ENCODE measurements at regions of chr2 and their contacts with region 1.

Region 1: GRCh38 chr2:173402405-173402974 is 47.8 kb downstream of the CDCA7 start:
- DNase-seq: peak; percentile 48
- ATAC-seq: peak; percentile 79
- H3K4me3 Mint-ChIP-seq: no peak overlapping the region
- H3K27ac Mint-ChIP-seq: no peak overlapping the region
- H3K4me1 Mint-ChIP-seq: peaks cover 4% of the 10 kb centered on the region
- H3K27me3 Mint-ChIP-seq: peaks cover 47% of the 10 kb centered on the region
- CTCF ChIP-seq: no peak

Region 2: DNA sequence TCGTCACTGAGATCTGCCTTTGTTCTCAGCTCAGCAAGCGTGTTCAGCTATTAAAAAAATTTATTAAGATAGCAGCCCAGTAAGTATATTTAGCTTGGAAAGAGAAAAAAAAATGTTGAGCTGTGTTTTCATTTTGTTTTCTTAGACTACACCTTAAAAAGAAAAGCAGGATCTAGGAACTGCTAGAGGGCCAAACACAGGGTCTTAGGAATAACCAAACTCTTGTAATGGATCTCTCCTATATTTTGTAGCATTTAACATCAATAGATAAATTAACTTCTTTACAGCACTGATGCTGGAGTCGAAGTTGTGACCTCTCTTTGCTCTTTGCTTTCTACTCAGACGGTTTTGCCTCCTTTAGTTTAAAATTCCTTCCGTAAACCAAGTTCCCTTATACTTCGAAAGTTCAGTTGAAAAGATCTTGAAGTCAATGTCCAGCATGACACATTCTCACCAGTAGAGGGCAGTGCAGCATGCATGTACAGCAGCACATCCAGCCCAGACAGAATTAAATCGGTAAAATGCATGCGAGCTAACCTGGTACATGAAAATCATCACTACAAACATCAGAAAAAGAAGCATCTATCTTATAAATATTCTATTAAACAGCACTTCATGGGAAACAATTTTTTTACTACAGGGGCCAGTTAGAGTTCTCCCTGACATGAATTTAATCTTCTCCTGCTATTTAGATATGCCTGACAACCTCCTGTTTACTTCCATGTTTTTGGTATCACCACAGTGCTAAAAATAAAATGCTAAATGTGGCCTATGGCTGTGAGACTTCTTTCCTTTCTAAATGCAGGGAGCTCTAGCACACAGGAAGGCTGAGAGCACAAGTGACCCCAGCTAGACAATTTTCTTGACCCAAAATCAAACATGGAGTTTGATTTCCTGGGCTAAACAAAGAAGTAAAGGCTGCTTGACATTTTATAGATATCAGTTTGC is 375.0 kb before region 1 on chr2:
- CTCF ChIA-PET with region 1: no interaction called
- POLR2A ChIA-PET with region 1: no interaction called
- intact Hi-C with region 1: loop called (anchors 1 kb)
- DNase-seq: no peak
- ATAC-seq: peak; percentile 67
- H3K4me3 Mint-ChIP-seq: no peak overlapping the region
- H3K27ac Mint-ChIP-seq: no peak overlapping the region
- H3K4me1 Mint-ChIP-seq: peaks cover 4% of the 10 kb centered on the region
- H3K27me3 Mint-ChIP-seq: peaks cover 8% of the 10 kb centered on the region
- CTCF ChIP-seq: peak; percentile 47

Region 3: DNA sequence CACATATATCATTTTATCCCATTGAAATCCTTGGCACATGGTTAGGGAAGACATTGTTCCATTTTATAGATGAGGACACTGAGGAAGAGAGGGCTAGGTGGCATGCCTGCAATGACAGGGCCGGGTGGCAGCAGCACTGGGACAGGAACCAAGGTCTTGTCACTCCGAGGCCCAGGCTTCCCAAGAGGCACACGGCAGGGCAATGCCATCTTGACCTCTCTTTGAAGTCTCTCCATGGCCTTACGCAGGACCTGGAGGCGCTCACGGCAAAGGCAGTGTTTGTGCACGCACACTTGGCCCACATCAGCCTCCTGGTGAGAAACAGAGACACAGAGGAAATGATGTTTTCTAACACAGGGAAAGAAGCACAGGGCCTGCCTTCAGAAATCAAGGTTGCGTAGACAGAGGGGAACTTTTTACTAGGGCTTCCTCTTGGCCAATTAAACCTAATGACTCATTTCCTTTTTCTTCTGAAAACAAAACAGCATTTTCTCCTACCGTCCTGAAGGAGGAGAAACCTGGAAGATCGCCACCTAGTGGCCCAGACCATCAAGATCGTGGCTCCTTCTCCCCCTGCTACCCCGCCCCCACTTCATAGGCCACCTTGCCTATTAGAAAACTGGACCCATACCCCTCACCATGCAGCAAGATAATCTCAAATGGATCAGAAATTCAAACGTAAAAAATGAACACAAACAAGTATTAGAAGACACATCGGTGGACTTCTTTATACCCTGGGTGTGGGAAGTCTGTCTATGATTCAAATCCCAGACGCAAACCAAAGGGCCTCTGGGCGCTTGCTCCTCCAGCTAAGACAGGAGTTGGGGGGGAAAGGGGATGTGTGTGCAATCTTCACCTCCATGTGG is 637.3 kb after region 1 on chr2:
- CTCF ChIA-PET with region 1: no interaction called
- POLR2A ChIA-PET with region 1: no interaction called
- intact Hi-C with region 1: loop called (anchors 2 kb)
- DNase-seq: peak; percentile 69
- ATAC-seq: peak; percentile 93
- H3K4me3 Mint-ChIP-seq: peak overlapping the region; percentile 50
- H3K27ac Mint-ChIP-seq: peak overlapping the region; percentile 92
- H3K4me1 Mint-ChIP-seq: peaks cover 28% of the 10 kb centered on the region
- H3K27me3 Mint-ChIP-seq: no peaks in the 10 kb centered on the region
- CTCF ChIP-seq: no peak

Region 4: DNA sequence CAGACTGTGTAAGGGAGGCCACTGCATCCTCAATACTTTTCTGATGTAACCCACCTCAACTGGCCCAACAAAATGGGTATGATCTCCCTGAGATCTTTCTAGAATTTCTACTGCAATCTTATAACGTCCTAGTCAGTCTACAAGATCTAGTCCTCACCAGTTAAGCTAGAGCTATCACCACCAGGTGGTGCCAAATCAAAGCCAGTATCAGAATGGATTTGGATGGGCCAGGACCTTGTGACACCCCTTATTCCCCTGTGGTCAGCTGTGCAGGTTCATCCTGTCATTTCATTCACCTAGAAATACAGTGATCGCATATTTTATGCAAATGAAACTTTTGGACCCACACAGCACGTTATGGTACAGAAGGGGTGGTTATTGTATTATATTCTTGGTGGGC is 755.5 kb after region 1 on chr2:
- CTCF ChIA-PET with region 1: no interaction called
- POLR2A ChIA-PET with region 1: no interaction called
- intact Hi-C with region 1: loop called (anchors 10 kb)
- DNase-seq: no peak
- ATAC-seq: peak; percentile 37
- H3K4me3 Mint-ChIP-seq: no peak overlapping the region
- H3K27ac Mint-ChIP-seq: no peak overlapping the region
- H3K4me1 Mint-ChIP-seq: no peaks in the 10 kb centered on the region
- H3K27me3 Mint-ChIP-seq: no peaks in the 10 kb centered on the region
- CTCF ChIP-seq: no peak